Activated CD4-positive, alpha-beta T cell treated with anti-CD3 and anti-CD28 coated beads for 36 hours (primary cell): ENCODE measurements at regions of chr6 and their contacts with region 1.

Region 1: DNA sequence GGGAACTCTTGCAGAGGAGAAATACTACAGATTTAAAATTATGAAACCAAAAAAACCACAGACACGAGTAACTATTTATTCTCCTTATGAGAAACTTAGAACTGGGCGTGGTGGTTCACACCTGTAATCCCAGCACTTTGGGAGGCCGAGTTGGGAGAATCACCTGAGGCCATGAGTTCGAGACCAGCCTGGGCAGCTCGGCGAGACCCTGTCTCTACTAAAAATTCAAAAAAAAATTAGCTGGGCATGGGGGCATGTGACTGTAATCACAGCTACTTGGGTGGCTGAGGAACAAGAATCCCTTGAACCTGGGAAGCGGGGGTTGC is 36.8 kb downstream of the SSR1 start:
- DNase-seq: no peak
- ATAC-seq: no peak
- H3K4me3 Mint-ChIP-seq: no peak overlapping the region
- H3K27ac Mint-ChIP-seq: no peak overlapping the region
- H3K4me1 Mint-ChIP-seq: peaks cover 5% of the 10 kb centered on the region
- H3K27me3 Mint-ChIP-seq: no peaks in the 10 kb centered on the region

Region 2: DNA sequence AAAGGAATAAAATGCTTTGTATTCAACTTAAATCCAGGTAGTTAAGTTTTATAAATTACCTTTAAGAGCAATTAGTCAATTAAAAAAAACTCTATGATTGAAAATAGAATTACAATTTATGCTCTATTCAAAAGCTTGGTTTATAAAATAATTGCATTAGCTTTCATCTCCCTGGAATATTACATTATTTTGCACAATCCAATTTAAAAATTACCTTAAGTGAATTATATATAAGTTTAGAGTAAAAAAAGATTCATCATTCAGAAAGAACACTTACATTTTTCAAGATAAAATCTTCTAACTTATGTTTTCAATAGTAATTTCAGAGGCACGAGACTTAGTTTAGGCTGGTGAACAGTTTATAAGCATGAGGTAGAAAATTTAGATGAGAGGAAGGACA is 22.0 kb after region 1 on chr6:
- CTCF ChIA-PET with region 1: interaction called, 10 read pairs
- POLR2A ChIA-PET with region 1: no interaction called
- intact Hi-C with region 1: no loop called
- DNase-seq: no peak
- ATAC-seq: no peak
- H3K4me3 Mint-ChIP-seq: no peak overlapping the region
- H3K27ac Mint-ChIP-seq: no peak overlapping the region
- H3K4me1 Mint-ChIP-seq: peaks cover 17% of the 10 kb centered on the region
- H3K27me3 Mint-ChIP-seq: no peaks in the 10 kb centered on the region

Region 3: DNA sequence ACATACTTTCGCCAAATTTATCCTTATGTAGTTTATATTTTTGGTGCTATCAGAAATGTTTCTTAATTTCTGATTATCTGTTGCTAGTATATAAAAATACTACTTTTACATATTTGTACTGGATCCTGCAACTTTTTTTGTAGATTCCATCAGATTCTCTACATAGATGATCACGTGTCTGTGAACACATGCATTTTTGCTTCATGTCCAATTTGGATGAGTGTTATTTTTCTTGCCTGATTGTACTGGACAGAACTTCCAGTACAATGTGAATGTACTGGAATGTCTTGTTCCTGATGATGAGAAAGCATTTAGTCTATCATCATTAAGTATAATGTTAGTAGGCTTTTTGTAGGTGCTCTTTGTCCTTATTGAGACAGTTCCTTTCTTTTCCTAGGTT is 61.9 kb after region 1 on chr6:
- CTCF ChIA-PET with region 1: interaction called, 3 read pairs
- POLR2A ChIA-PET with region 1: no interaction called
- intact Hi-C with region 1: loop called in 1 of 2 experiments (anchors 2 kb)
- DNase-seq: no peak
- ATAC-seq: no peak
- H3K4me3 Mint-ChIP-seq: no peak overlapping the region
- H3K27ac Mint-ChIP-seq: no peak overlapping the region
- H3K4me1 Mint-ChIP-seq: peaks cover 2% of the 10 kb centered on the region
- H3K27me3 Mint-ChIP-seq: peaks cover 2% of the 10 kb centered on the region

Region 4: GRCh38 chr6:7505187-7505811 is 229.1 kb after region 1 on chr6:
- CTCF ChIA-PET with region 1: no interaction called
- POLR2A ChIA-PET with region 1: no interaction called
- intact Hi-C with region 1: no loop called
- DNase-seq: peak; percentile 55
- ATAC-seq: peak; percentile 74
- H3K4me3 Mint-ChIP-seq: no peak overlapping the region
- H3K27ac Mint-ChIP-seq: no peak overlapping the region
- H3K4me1 Mint-ChIP-seq: peaks cover 4% of the 10 kb centered on the region
- H3K27me3 Mint-ChIP-seq: peaks cover 15% of the 10 kb centered on the region

Region 5: GRCh38 chr6:7615611-7616383 is 339.6 kb after region 1 on chr6:
- CTCF ChIA-PET with region 1: interaction called, 24 read pairs
- POLR2A ChIA-PET with region 1: no interaction called
- intact Hi-C with region 1: loop called (anchors 1 kb)
- DNase-seq: peak; percentile 44
- ATAC-seq: peak; percentile 69
- H3K4me3 Mint-ChIP-seq: no peak overlapping the region
- H3K27ac Mint-ChIP-seq: no peak overlapping the region
- H3K4me1 Mint-ChIP-seq: peaks cover 17% of the 10 kb centered on the region
- H3K27me3 Mint-ChIP-seq: no peaks in the 10 kb centered on the region